GM12878 (cell line): ENCODE measurements at regions of chr5 and their contacts with region 1.

Region 1: GRCh38 chr5:117118499-117118898 is 543.9 kb upstream of the SEMA6A start:
- DNase-seq: no peak
- ATAC-seq: peak; percentile 62
- H3K4me3 ChIP-seq: no peak overlapping the region
- H3K27ac ChIP-seq: no peak overlapping the region
- H3K4me1 ChIP-seq: no peaks in the 10 kb centered on the region
- H3K27me3 ChIP-seq: no peaks in the 10 kb centered on the region
- CTCF ChIP-seq: no peak
- EP300 ChIP-seq: no peak
- POLR2A ChIP-seq: no peak
- RAD21 ChIP-seq: no peak

Region 2: DNA sequence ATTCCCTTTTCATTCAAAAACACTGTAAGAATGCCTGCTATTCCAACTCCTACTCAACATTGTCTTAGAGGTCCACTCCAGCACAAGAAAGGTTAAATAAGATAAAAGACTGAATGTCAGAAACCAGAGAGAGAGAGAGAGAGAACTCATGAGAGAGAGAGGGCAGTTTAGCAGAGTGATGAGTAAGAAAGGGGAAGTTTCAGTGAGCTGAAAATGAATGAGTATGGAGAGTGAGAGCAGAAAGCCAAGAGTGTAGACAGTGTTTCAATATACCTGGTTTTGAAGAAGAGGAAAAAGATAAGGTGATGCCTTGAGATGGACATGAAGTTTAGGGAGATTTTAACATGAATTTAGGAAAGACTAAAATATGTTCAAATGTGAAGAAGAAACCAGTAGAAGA is 15.9 kb before region 1 on chr5:
- CTCF ChIA-PET with region 1: interaction called, 4 read pairs
- POLR2A ChIA-PET with region 1: no interaction called
- RAD21 ChIA-PET with region 1: no interaction called
- SMC1A ChIA-PET with region 1: interaction called, 10 read pairs
- in situ Hi-C with region 1: no loop called
- intact Hi-C with region 1: no loop called
- DNase-seq: no peak
- ATAC-seq: peak; percentile 76
- H3K4me3 ChIP-seq: no peak overlapping the region
- H3K27ac ChIP-seq: no peak overlapping the region
- H3K4me1 ChIP-seq: no peaks in the 10 kb centered on the region
- H3K27me3 ChIP-seq: no peaks in the 10 kb centered on the region
- CTCF ChIP-seq: no peak
- EP300 ChIP-seq: no peak
- POLR2A ChIP-seq: no peak
- RAD21 ChIP-seq: no peak